ENCODE measurements at regions of chr15 and their contacts with region 1.

Region 1: DNA sequence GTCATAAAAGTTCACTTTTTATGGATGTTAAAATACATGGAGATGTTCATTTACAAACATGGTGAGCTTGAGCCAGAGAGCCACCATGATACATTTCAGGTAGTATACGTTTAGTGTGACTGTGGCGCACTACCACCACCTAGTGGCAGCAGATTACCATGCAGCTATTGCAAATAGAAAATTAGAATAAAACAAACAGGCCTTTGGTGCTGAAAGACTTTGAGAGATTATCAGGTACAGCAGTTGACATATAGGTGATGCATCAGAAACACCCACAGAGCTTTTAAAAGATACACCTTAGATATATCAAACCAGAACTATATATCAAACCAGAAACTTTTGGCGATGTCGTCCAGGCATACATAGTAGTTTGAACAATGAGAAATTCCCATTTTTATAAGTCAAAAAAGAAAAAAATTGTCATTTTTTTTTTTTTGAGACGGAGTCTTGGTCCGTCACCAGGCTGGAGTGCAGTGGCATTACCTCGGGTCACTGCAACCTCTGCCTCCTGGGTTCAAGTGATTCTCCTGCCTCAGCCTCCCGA is 42.0 kb upstream of the ICE2 start:
- DNase-seq: peak; percentile 72
- H3K4me3 ChIP-seq: no peak overlapping the region
- H3K27ac ChIP-seq: peak overlapping the region; percentile 89
- H3K4me1 ChIP-seq: peaks cover 39% of the 10 kb centered on the region
- H3K27me3 ChIP-seq: no peaks in the 10 kb centered on the region
- CTCF ChIP-seq: peak; percentile 87 to 97

Region 2: GRCh38 chr15:59764775-59765174 is 756.1 kb before region 1 on chr15:
- CTCF ChIA-PET with region 1: no interaction called
- dilution Hi-C with region 1: no loop called
- in situ Hi-C with region 1: no loop called
- intact Hi-C with region 1: no loop called
- DNase-seq: no peak
- H3K4me3 ChIP-seq: no peak overlapping the region
- H3K27ac ChIP-seq: no peak overlapping the region
- H3K4me1 ChIP-seq: no peaks in the 10 kb centered on the region
- H3K27me3 ChIP-seq: no peaks in the 10 kb centered on the region
- CTCF ChIP-seq: peak in 1 of 2 donors; percentile 36

Region 3: GRCh38 chr15:60351066-60351465 is 169.8 kb before region 1 on chr15:
- CTCF ChIA-PET with region 1: no interaction called
- dilution Hi-C with region 1: no loop called
- in situ Hi-C with region 1: no loop called
- intact Hi-C with region 1: no loop called
- DNase-seq: peak; percentile 20
- H3K4me3 ChIP-seq: no peak overlapping the region
- H3K27ac ChIP-seq: no peak overlapping the region
- H3K4me1 ChIP-seq: no peaks in the 10 kb centered on the region
- H3K27me3 ChIP-seq: no peaks in the 10 kb centered on the region
- CTCF ChIP-seq: no peak

Region 4: GRCh38 chr15:60374628-60375081 is 146.2 kb before region 1 on chr15:
- CTCF ChIA-PET with region 1: no interaction called
- dilution Hi-C with region 1: no loop called
- in situ Hi-C with region 1: no loop called
- intact Hi-C with region 1: loop called (anchors 5 kb)
- DNase-seq: peak; percentile 96
- H3K4me3 ChIP-seq: no peak overlapping the region
- H3K27ac ChIP-seq: peak overlapping the region; percentile 96
- H3K4me1 ChIP-seq: peaks cover 91% of the 10 kb centered on the region
- H3K27me3 ChIP-seq: no peaks in the 10 kb centered on the region
- CTCF ChIP-seq: no peak

Region 5: DNA sequence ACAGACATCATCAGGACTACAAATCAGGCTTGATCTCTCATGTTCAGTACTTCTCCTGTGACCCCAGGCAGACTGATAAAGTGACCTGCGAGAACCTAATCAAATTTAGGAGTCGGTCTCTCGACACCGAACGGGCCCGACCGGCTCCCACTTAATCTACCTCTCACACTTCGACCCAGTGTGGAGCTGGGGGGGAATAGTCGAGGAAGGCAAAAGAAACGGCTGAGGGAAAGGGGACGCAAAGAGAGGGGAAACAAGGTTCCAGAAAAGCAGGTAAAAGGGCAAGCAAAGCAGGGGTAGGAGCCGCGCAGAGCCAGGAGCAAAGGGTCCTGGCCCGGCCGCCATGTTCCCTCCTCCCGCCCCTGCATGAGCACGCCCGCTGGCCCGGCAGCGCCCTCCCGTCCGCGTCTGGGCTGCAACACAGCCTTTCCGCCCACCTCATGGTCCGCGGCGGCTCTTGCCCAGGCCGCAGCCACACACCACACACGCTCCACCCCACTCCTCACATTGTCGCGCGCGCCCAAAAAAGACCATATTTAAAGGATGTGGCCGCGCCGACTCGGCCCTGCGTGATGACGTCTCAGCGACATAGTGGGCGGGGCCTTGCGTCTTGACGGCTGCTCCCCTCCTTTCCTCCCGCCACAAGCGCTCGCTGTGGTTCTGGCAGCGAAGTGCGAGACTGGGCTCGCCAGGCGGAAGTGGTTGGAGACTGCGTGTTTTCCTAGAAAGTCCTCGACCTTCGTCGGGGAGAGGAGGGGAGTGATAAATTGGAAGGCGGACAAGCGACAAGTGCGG is 42.1 kb before region 1 on chr15 and contains the start of gene ICE2:
- CTCF ChIA-PET with region 1: no interaction called
- dilution Hi-C with region 1: no loop called
- in situ Hi-C with region 1: no loop called
- intact Hi-C with region 1: loop called (anchors 2 kb)
- DNase-seq: peak; percentile 91
- H3K4me3 ChIP-seq: peak within 1 kb of the TSS; percentile 63 to 82 (median 77)
- H3K27ac ChIP-seq: peak within 1 kb of the TSS; percentile 86
- H3K4me1 ChIP-seq: peaks cover 25% of the 10 kb centered on the region
- H3K27me3 ChIP-seq: no peaks in the 10 kb centered on the region
- CTCF ChIP-seq: no peak
- total RNA-seq, gene ICE2: 31.2 to 48.0 TPM